ENCODE measurements at regions of chr17 and their contacts with region 1.

Region 1: DNA sequence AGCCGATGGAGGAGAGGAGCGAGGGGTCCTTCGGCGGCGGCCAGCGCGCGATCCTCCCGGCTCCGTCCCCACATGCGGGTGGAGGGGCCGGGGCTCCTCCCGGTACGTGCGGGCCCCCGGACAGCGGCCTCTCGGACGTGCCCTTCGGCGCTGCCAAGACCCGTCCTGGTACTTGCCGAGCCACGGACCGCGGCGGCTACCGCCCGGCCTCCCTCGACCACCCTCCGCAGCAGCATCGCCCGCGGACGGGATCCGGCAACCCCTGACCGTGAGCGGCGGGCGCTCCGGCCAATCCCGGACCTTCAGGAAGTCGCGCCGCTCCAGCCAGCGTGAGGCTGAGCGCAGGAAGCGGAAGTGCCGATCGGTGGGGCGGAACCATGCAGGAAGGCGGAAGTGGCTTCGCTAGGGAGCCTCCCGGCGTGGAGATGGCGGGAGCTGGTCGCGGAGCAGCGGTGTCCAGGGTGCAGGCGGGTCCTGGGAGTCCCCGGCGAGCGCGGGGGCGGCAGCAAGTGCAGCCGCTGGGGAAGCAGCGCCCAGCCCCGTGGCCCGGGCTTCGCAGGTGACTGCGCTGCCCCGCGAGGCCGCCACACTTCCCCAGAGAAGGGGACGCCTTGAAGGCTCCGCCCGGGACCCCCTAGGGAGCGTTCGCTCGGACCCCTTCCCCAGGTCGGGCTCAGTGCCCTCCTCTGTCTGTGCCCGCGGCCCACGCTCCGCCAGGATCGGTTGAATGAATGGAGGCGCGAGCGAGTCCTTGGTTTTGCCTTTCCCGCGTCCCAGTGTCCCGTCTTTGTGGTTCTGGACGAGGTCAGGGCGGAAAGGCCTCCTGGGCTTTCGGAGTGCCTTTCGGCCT is at the starts of genes CCDC137 and OXLD1:
- DNase-seq: peak; percentile 78 to 96 (median 93)
- ATAC-seq: peak; percentile 83
- H3K4me3 ChIP-seq: peak within 1 kb of the TSS; percentile 78 to 98
- H3K4me3 Mint-ChIP-seq: peak within 1 kb of the TSS; percentile 95
- H3K27ac ChIP-seq: peak within 1 kb of the TSS; percentile 72 to 83
- H3K27ac Mint-ChIP-seq: peak within 1 kb of the TSS; percentile 97
- H3K4me1 ChIP-seq: peaks cover 48% of the 10 kb centered on the region
- H3K4me1 Mint-ChIP-seq: peaks cover 50% of the 10 kb centered on the region
- H3K27me3 ChIP-seq: no peaks in the 10 kb centered on the region
- H3K27me3 Mint-ChIP-seq: no peaks in the 10 kb centered on the region
- CTCF ChIP-seq: no peak
- total RNA-seq, gene CCDC137: 18.0 to 19.9 TPM
- total RNA-seq, gene OXLD1: 24.4 to 26.1 TPM

Region 2: DNA sequence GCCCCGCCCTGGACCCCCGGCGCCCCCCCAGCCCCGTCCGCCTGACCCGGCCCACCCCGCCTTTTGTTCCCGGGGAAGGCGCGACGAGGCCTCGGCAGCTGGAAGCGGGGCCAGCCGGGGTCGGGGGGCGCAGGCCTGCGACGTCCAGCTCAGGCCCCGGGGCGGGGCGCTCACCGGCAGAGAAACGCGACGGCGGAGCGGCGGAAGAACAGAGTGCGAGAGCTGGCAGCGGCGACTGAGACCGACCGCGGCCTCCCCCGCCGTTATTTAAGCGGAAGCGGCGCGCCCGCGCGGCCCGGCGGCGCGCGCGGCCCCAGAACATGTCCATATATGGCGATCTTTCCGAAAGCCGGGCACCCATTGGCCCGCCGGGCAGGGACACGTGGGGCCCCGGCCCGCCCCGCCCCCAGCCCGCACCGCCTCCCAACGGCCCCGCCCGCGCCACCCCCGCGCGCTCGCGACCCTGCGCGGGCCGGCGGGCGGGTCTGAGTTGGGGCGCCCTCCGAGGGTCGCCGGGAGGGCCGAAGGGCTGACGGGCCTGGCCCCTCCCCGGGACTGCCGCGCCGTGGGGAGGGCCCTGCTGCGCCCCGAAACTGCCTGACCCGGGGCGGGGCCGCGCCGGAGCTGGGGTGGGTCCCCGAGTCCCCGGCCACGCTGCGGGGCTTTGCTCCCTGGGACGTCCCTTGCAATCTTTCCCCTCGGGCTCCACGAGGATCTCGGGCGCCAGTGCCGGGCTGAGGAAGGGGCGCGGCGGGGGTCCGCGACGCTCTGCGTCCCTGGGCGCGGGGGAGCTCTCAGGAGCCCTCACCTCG is 153.8 kb before region 1 on chr17 and contains the start of gene ACTG1:
- CTCF ChIA-PET with region 1: no interaction called
- POLR2A ChIA-PET with region 1: interaction called, 4 read pairs
- intact Hi-C with region 1: loop called in 1 of 2 experiments (anchors 10 kb)
- DNase-seq: peak; percentile 87 to 97 (median 92)
- ATAC-seq: peak; percentile 60
- H3K4me3 ChIP-seq: peak within 1 kb of the TSS; percentile 84 to 93
- H3K4me3 Mint-ChIP-seq: peak within 1 kb of the TSS; percentile 98
- H3K27ac ChIP-seq: peak within 1 kb of the TSS; percentile 56 to 93
- H3K27ac Mint-ChIP-seq: peak within 1 kb of the TSS; percentile 98
- H3K4me1 ChIP-seq: peaks cover 49% of the 10 kb centered on the region
- H3K4me1 Mint-ChIP-seq: peaks cover 57% of the 10 kb centered on the region
- H3K27me3 ChIP-seq: no peaks in the 10 kb centered on the region
- H3K27me3 Mint-ChIP-seq: no peaks in the 10 kb centered on the region
- CTCF ChIP-seq: no peak
- total RNA-seq, gene ACTG1: 1,370 to 1,375 TPM

Region 3: DNA sequence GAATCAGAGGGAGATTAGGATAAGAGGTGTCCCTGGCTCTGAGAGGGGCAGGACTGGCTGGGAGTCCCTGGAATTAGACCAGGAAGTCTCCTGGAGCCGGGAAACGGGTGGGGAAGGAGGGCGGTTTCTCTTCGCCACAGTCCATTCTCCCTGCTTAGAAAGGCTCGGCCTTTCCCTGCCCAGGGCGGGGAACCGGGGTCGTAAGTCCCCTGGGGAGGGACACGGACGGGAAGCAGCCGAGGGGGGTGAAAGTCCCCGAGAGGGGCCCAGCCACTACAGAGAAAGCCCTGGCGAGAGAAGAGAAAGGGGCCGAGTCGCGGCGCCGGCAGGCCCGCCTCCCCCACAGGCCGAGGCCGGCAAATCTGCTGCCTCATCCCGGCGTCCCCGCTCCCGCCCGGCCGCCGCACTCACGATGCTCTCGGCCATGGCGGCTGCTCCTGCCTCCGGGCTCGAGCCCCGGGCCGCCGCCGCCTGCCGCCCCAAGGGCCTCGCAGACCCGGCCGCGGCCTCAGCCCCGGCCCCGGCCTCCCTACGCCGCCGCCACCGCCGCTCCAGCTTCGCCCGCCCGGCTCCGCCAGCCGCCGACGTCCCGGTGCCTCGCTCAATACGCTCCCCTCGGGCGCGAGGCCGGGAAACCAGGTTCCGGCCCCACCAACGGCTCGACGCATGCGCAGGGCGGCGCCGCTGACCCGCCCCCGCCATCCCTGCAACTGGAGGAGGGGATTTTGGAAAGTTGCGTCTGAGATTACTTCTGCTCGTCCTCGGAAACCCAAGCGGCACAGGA is 29.9 kb before region 1 on chr17 and contains the starts of genes NPLOC4 and TSPAN10:
- CTCF ChIA-PET with region 1: no interaction called
- POLR2A ChIA-PET with region 1: interaction called, 9 read pairs
- intact Hi-C with region 1: loop called (anchors 1 kb)
- DNase-seq: peak; percentile 66 to 93 (median 83)
- ATAC-seq: peak; percentile 96
- H3K4me3 ChIP-seq: peak within 1 kb of the TSS; percentile 85 to 90
- H3K4me3 Mint-ChIP-seq: peak within 1 kb of the TSS; percentile 90
- H3K27ac ChIP-seq: peak within 1 kb of the TSS; percentile 61 to 73
- H3K27ac Mint-ChIP-seq: peak within 1 kb of the TSS; percentile 91
- H3K4me1 ChIP-seq: peaks cover 19% of the 10 kb centered on the region
- H3K4me1 Mint-ChIP-seq: peaks cover 26% of the 10 kb centered on the region
- H3K27me3 ChIP-seq: no peaks in the 10 kb centered on the region
- H3K27me3 Mint-ChIP-seq: no peaks in the 10 kb centered on the region
- CTCF ChIP-seq: no peak
- total RNA-seq, gene NPLOC4: 55.9 to 69.6 TPM
- total RNA-seq, gene TSPAN10: 0.17 to 0.22 TPM

Region 4: DNA sequence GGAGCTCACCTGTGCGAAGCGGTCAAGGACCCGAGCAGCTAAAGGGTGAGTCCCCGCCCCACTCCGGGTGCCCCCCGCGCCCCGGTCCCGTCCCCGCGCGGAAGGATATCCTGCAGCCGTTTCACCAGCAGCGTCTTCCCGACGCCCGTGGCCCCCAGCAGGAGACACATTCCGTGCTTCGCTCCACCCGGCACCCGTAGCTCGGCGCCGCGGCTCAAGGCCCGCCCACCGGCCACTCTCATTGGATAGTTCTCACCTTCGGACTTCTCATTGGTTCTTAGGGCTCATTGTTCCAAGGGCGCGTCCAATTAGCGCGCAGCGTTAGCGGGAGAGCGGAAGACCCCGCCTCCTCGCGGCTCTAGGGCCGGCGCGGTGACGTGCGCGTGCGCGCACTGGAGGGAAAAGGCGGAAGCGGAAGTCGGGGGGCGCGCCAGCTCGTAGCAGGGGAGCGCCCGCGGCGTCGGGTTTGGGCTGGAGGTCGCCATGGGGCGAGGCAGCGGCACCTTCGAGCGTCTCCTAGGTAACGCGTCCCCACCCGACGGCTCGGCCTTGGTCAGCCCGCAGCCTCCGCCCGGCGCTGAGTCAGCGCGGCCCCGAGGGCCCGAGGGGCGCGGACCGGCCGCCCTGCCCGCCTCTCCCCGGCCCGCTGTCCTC is 17.1 kb after region 1 on chr17 and contains the starts of genes ARL16 and HGS:
- CTCF ChIA-PET with region 1: no interaction called
- POLR2A ChIA-PET with region 1: interaction called, 15 read pairs
- intact Hi-C with region 1: loop called (anchors 1 kb)
- DNase-seq: peak; percentile 95 to 99 (median 97)
- ATAC-seq: peak; percentile 98
- H3K4me3 ChIP-seq: peak within 1 kb of the TSS; percentile 89 to 98
- H3K4me3 Mint-ChIP-seq: peak within 1 kb of the TSS; percentile 89
- H3K27ac ChIP-seq: peak within 1 kb of the TSS; percentile 57 to 77
- H3K27ac Mint-ChIP-seq: peak within 1 kb of the TSS; percentile 88
- H3K4me1 ChIP-seq: peaks cover 27% of the 10 kb centered on the region
- H3K4me1 Mint-ChIP-seq: peaks cover 32% of the 10 kb centered on the region
- H3K27me3 ChIP-seq: no peaks in the 10 kb centered on the region
- H3K27me3 Mint-ChIP-seq: no peaks in the 10 kb centered on the region
- CTCF ChIP-seq: no peak
- total RNA-seq, gene ARL16: 14.3 to 16.4 TPM
- total RNA-seq, gene HGS: 121 to 126 TPM

Region 5: GRCh38 chr17:81711814-81712467 is 45.4 kb after region 1 on chr17 and contains the start of gene SLC25A10:
- CTCF ChIA-PET with region 1: no interaction called
- POLR2A ChIA-PET with region 1: no interaction called
- intact Hi-C with region 1: loop called in 1 of 2 experiments (anchors 1 kb)
- DNase-seq: peak; percentile 46 to 89 (median 74)
- ATAC-seq: peak; percentile 84
- H3K4me3 ChIP-seq: peak within 1 kb of the TSS; percentile 38 to 53
- H3K4me3 Mint-ChIP-seq: peak within 1 kb of the TSS; percentile 83
- H3K27ac ChIP-seq: no peak within 1 kb of the TSS
- H3K27ac Mint-ChIP-seq: no peak within 1 kb of the TSS
- H3K4me1 ChIP-seq: peaks cover 25% of the 10 kb centered on the region
- H3K4me1 Mint-ChIP-seq: peaks cover 13% of the 10 kb centered on the region
- H3K27me3 ChIP-seq: no peaks in the 10 kb centered on the region
- H3K27me3 Mint-ChIP-seq: no peaks in the 10 kb centered on the region
- CTCF ChIP-seq: no peak
- total RNA-seq, gene SLC25A10: 3.7 to 5.4 TPM